ENCODE measurements at regions of chr1 and their contacts with region 1.

Region 1: DNA sequence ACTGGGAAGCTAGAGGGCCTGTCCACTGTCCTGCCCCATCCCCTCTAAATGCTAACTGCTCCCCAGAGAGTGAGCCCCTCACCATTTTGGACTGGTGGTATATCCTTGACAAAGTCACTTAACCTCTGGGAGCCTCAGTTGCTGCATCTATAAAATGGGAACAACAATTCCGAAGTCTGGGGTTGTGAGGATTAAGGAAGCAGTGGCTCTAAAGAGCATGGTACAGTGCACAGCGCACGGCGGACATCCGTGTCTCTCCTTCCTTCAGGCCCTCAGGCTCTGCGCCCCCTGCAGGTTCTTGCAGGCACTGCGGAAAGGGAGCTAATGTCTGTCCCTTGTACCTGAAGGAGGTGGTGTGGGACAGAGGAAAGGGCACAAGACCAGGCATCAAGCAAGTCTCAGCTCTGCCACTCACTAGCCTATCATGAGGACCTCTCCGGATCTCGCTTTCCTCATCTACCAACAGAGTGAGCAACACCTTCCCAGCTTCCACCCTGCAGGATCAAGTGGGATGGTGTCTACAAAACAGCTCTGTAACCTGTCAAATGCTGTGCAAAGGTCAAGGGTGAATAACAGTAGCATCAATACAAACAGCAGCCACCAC is 20.1 kb downstream of the ECE1 start:
- DNase-seq: peak; percentile 90
- H3K4me3 Mint-ChIP-seq: no peak overlapping the region
- H3K27ac Mint-ChIP-seq: no peak overlapping the region
- H3K4me1 Mint-ChIP-seq: peaks cover 23% of the 10 kb centered on the region
- H3K27me3 Mint-ChIP-seq: no peaks in the 10 kb centered on the region

Region 2: DNA sequence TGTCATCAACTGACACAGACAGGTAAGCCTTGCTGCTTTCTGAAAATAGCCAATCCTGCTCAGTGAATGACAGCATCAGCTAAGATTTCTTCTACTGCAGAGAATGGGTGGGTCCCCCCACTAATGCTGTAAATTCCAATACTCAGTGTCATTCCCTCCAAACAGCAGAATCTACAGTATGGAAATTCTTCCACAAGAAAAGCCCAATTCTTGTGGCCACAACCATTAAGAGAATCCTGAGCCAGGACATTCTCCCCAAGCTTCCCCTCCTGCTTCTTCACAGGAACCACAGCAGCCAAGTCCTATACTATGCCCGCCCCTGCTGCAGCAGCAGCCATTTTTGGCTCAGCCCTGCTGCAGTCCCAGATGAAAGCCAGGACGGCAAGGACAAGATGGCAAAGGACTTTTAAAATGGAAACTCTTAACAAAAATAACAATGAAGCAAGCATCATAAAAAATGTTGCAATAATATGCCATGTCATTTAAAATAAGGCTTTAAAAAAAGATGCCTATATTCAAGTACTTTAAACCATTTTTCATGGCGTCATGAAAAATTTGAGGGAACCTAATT is 120.2 kb before region 1 on chr1:
- CTCF ChIA-PET with region 1: no interaction called
- POLR2A ChIA-PET with region 1: no interaction called
- intact Hi-C with region 1: no loop called
- DNase-seq: no peak
- H3K4me3 Mint-ChIP-seq: no peak overlapping the region
- H3K27ac Mint-ChIP-seq: no peak overlapping the region
- H3K4me1 Mint-ChIP-seq: peaks cover 6% of the 10 kb centered on the region
- H3K27me3 Mint-ChIP-seq: no peaks in the 10 kb centered on the region

Region 3: GRCh38 chr1:21244986-21245687 is 25.1 kb before region 1 on chr1:
- CTCF ChIA-PET with region 1: interaction called, 42 read pairs
- POLR2A ChIA-PET with region 1: no interaction called
- intact Hi-C with region 1: no loop called
- DNase-seq: peak; percentile 27
- H3K4me3 Mint-ChIP-seq: no peak overlapping the region
- H3K27ac Mint-ChIP-seq: no peak overlapping the region
- H3K4me1 Mint-ChIP-seq: no peaks in the 10 kb centered on the region
- H3K27me3 Mint-ChIP-seq: no peaks in the 10 kb centered on the region

Region 4: DNA sequence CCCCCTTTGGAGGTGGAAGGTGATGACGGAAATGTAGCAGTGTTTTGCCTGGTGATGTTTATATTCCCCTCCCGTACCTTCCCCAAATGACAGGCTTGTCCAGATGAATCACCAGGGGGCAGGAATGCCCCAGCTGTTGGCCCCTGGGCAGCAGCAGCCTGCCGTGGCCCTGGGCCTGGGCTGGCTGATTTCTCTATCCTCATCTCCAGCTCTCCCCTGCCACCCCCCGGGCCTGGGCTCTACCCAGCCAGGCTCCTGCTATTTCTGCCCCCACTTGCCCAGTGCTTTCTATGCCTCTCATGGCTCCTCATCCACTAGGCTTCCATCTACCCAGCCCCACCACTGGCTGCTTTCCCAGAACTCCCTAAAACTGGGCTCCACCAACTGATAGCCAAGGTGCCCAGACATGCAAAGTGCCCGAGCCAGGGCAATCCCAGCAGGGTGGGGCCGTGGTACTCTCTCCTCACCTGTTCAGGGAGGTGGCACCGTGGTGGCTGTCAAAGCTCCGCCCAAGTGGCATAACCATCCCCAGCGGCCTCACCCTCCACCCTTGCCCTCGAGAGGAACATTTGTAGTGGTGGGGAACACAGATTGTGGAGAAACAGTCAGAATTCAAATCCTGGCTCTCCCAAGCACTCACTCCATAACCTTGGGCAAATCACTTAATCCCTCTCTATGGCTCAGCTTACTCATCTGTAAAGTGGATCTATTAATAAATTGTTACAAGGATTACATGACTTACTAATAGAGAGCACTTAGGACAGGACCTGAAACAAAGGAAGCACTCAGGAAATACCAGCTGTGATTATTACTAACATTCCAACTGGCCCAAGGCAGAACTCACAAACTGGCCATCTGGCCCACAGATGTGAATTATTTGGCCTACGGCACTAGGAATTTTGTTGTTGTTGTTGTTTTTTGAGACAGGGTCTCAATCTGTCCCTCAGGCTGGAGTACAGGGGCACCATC is 32.8 kb after region 1 on chr1:
- CTCF ChIA-PET with region 1: interaction called, 39 read pairs
- POLR2A ChIA-PET with region 1: no interaction called
- intact Hi-C with region 1: no loop called
- DNase-seq: no peak
- H3K4me3 Mint-ChIP-seq: no peak overlapping the region
- H3K27ac Mint-ChIP-seq: peak overlapping the region; percentile 46
- H3K4me1 Mint-ChIP-seq: peaks cover 81% of the 10 kb centered on the region
- H3K27me3 Mint-ChIP-seq: no peaks in the 10 kb centered on the region

Region 5: DNA sequence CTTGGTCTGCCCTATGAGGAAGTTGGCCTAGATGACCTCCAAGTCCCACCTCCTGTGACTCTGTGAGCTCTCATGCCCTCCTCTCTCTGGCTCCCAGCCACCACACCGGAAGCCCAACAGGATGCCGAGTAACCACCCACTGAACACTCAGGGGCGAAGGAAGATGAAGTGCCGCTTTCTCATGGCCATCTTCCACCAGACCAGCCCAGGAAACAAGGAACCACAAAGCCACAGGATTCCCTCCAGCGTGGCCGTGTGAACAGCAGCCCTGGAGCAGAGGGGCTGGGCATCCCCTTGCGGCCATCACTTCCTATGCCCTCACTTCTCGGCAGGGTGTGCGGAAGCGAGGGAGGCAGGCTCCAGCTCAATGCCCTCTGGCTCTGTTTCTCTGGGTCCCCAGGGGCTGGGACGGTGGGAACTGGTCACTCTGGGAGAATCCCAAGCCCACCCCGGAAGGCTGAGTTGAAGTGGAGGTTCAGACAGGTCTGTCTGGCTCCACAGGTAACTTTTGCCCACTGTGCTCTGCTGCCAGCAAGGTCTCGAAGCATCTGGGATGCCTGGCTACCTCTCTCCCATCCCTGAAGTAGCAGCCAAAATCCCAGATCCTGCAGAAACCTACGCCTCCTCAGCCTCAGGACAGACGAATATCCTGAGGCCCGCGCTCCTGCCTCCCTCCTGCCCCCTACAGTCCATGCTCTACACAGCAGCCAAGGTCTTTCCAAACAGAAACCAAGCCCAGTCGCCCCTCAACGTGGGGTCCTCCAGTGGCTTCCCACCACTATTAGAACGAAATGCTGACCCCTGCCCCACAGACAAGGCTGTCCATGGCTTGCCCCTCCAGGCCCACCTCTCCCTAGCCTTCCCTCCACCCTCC is 64.3 kb after region 1 on chr1:
- CTCF ChIA-PET with region 1: interaction called, 87 read pairs
- POLR2A ChIA-PET with region 1: interaction called, 4 read pairs
- intact Hi-C with region 1: no loop called
- DNase-seq: peak; percentile 89
- H3K4me3 Mint-ChIP-seq: peak overlapping the region; percentile 83
- H3K27ac Mint-ChIP-seq: peak overlapping the region; percentile 98
- H3K4me1 Mint-ChIP-seq: peaks cover 88% of the 10 kb centered on the region
- H3K27me3 Mint-ChIP-seq: no peaks in the 10 kb centered on the region

Region 6: GRCh38 chr1:21350187-21350885 is 80.1 kb after region 1 on chr1:
- CTCF ChIA-PET with region 1: interaction called, 41 read pairs
- POLR2A ChIA-PET with region 1: interaction called, 5 read pairs
- intact Hi-C with region 1: no loop called
- DNase-seq: no peak
- H3K4me3 Mint-ChIP-seq: no peak overlapping the region
- H3K27ac Mint-ChIP-seq: no peak overlapping the region
- H3K4me1 Mint-ChIP-seq: no peaks in the 10 kb centered on the region
- H3K27me3 Mint-ChIP-seq: no peaks in the 10 kb centered on the region

Measured in activated CD4-positive, alpha-beta memory T cell treated with anti-CD3 and anti-CD28 coated beads for 36 hours (primary cell).